Naive thymus-derived CD4-positive, alpha-beta T cell (primary cell): ENCODE measurements at regions of chr1 and their contacts with region 1.

Region 1: GRCh38 chr1:223269006-223269405 is 95.0 kb downstream of the SUSD4 start:
- DNase-seq: no peak
- ATAC-seq: no peak
- H3K4me3 ChIP-seq: no peak overlapping the region
- H3K4me3 Mint-ChIP-seq: no peak overlapping the region
- H3K27ac ChIP-seq: no peak overlapping the region
- H3K27ac Mint-ChIP-seq: no peak overlapping the region
- H3K4me1 ChIP-seq: no peaks in the 10 kb centered on the region
- H3K4me1 Mint-ChIP-seq: peaks cover 0 to 16% (median 13%) of the 10 kb centered on the region in 7 donors
- H3K27me3 ChIP-seq: no peaks in the 10 kb centered on the region
- H3K27me3 Mint-ChIP-seq: peaks cover 0 to 4% (median 0%) of the 10 kb centered on the region in 5 donors

Region 2: DNA sequence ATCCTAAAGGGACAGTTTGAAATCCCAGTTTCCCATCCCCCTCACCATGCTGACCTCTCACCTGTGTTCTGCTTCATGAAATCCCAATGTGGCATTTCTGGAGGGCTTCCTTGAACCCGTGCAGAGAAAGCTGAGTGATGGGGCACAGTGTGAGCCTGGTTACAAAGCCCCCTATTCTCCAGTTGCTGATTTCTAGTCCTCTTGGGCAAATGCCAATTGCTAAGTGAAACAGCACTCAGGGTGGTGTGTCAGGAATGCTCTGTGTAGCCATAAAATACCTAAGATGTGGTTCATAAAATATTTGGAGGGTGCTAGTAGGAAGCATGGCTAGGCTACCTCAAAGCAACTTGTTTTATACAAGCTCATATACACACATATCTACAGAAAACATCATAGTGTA is 62.9 kb after region 1 on chr1:
- CTCF ChIA-PET with region 1: no interaction called
- POLR2A ChIA-PET with region 1: no interaction called
- intact Hi-C with region 1: loop called in 1 of 2 experiments (anchors 2 kb)
- DNase-seq: no peak
- ATAC-seq: no peak
- H3K4me3 ChIP-seq: no peak overlapping the region
- H3K4me3 Mint-ChIP-seq: peak overlapping the region in 1 of 10 donors; percentile 60
- H3K27ac ChIP-seq: no peak overlapping the region
- H3K27ac Mint-ChIP-seq: peak overlapping the region in 3 of 9 donors; percentile 77 to 88 (median 80)
- H3K4me1 ChIP-seq: peaks cover 0 to 15% of the 10 kb centered on the region in 2 donors
- H3K4me1 Mint-ChIP-seq: peaks cover 0 to 36% (median 21%) of the 10 kb centered on the region in 7 donors
- H3K27me3 ChIP-seq: no peaks in the 10 kb centered on the region
- H3K27me3 Mint-ChIP-seq: no peaks in the 10 kb centered on the region